ENCODE measurements at regions of chr10 and their contacts with region 1.

Region 1: GRCh38 chr10:124626759-124627380 is 117.3 kb downstream of the FAM53B start:
- DNase-seq: peak; percentile 76
- ATAC-seq: peak; percentile 76
- H3K4me3 Mint-ChIP-seq: no peak overlapping the region
- H3K27ac Mint-ChIP-seq: no peak overlapping the region
- H3K4me1 Mint-ChIP-seq: peaks cover 33% of the 10 kb centered on the region
- H3K27me3 Mint-ChIP-seq: no peaks in the 10 kb centered on the region
- CTCF ChIP-seq: no peak

Region 2: GRCh38 chr10:124403548-124403947 is 223.3 kb before region 1 on chr10:
- CTCF ChIA-PET with region 1: no interaction called
- POLR2A ChIA-PET with region 1: no interaction called
- intact Hi-C with region 1: no loop called
- DNase-seq: peak; percentile 48
- ATAC-seq: peak; percentile 99
- H3K4me3 Mint-ChIP-seq: no peak overlapping the region
- H3K27ac Mint-ChIP-seq: peak overlapping the region; percentile 51
- H3K4me1 Mint-ChIP-seq: peaks cover 4% of the 10 kb centered on the region
- H3K27me3 Mint-ChIP-seq: no peaks in the 10 kb centered on the region
- CTCF ChIP-seq: peak; percentile 68

Region 3: DNA sequence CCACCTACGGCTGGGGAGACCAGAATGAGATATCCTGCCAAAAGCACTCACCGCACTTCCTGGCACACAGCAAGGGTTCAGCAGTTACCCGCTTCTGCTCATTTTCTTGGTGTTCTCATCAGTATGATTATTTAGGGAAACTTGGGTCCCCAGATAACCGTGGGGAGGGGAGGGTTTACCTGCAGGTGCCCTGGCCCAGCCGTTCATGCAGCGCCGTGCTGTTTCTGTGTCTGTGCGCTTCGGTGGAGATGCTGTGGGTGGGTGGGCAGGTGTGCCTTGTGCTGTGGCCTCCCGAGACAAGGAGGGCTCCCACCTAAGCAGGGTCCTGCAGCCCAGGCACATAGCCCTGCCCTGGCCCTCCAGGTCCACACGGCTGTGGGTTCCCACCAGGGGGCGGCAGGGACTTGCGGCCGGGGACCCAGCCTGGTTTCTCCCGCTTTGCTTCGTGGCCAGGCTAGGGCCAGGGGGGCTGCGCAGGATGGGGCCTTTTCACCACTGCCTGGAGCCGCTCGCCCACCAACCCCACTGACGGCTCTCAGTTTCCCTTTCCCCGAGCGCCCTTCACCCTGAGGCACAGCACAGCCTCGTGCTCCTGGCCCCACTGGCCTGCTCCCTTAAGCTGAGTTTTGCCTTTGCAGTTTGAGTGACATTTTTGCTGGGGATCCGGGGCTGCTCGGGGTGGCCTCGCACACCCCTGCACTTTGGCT is 86.8 kb before region 1 on chr10:
- CTCF ChIA-PET with region 1: no interaction called
- POLR2A ChIA-PET with region 1: no interaction called
- intact Hi-C with region 1: loop called (anchors 5 kb)
- DNase-seq: peak; percentile 75
- ATAC-seq: peak; percentile 89
- H3K4me3 Mint-ChIP-seq: no peak overlapping the region
- H3K27ac Mint-ChIP-seq: no peak overlapping the region
- H3K4me1 Mint-ChIP-seq: peaks cover 12% of the 10 kb centered on the region
- H3K27me3 Mint-ChIP-seq: no peaks in the 10 kb centered on the region
- CTCF ChIP-seq: peak; percentile 64

Region 4: GRCh38 chr10:124671486-124672075 is 44.7 kb after region 1 on chr10:
- CTCF ChIA-PET with region 1: no interaction called
- POLR2A ChIA-PET with region 1: no interaction called
- intact Hi-C with region 1: no loop called
- DNase-seq: peak; percentile 49
- ATAC-seq: peak; percentile 65
- H3K4me3 Mint-ChIP-seq: no peak overlapping the region
- H3K27ac Mint-ChIP-seq: peak overlapping the region; percentile 59
- H3K4me1 Mint-ChIP-seq: peaks cover 61% of the 10 kb centered on the region
- H3K27me3 Mint-ChIP-seq: no peaks in the 10 kb centered on the region
- CTCF ChIP-seq: peak; percentile 45

Measured in activated CD8-positive, alpha-beta T cell treated with anti-CD3 and anti-CD28 coated beads for 36 hours (primary cell).